ENCODE measurements at regions of chr17 and their contacts with region 1.

Region 1: GRCh38 chr17:3821101-3821500 is 20.1 kb upstream of the ITGAE start:
- DNase-seq: peak in 1 of 42 donors; percentile 6

Region 2: GRCh38 chr17:3738562-3739295 is 82.4 kb before region 1 on chr17:
- intact Hi-C with region 1: loop called (anchors 5 kb)
- DNase-seq: peak; percentile 52 to 95 (median 79)

Measured in head of caudate nucleus (tissue), 42 donors.